ENCODE measurements at regions of chr3 and their contacts with region 1.

Region 1: DNA sequence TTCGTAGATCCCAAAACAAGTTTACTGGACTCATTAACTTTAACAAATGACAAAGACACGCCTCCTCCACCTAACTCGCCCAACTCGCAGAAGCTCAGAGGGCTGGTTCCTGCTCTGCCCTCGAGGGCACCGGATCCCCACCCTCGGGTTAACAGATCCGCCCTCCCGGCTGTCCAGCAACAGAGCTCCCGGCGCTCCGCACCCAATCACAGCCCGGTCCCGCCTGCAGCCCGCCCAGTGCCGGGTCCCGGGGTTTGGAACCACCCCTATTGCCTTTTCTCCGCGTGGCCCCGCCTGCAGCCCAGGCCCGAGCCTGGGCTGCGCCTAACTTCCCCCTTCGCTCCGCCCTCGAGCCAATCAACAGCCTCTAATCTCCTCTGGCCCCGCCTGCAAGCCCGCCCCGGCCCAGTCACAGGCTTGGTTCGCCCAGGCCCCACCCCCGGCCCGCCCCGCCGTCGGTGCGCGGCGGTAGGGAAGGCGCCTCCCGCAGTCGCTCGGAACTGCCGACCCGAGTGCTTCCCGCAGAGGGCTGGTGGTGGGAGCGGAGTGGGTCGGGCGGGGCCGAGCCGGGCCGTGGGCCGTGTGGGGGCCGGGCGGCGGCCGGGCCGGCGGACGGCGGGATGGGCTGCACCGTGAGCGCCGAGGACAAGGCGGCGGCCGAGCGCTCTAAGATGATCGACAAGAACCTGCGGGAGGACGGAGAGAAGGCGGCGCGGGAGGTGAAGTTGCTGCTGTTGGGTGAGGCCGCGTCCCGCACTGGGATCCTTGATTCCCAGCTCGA is at the start of gene GNAI2:
- DNase-seq: peak; percentile 98 to 99 (median 98)
- ATAC-seq: peak; percentile 85
- H3K4me3 ChIP-seq: peak within 1 kb of the TSS; percentile 94 to 100
- H3K4me3 Mint-ChIP-seq: peak within 1 kb of the TSS; percentile 96
- H3K27ac ChIP-seq: peak within 1 kb of the TSS; percentile 72 to 83
- H3K27ac Mint-ChIP-seq: peak within 1 kb of the TSS; percentile 96
- H3K4me1 ChIP-seq: peaks cover 38% of the 10 kb centered on the region
- H3K4me1 Mint-ChIP-seq: peaks cover 33% of the 10 kb centered on the region
- H3K27me3 ChIP-seq: no peaks in the 10 kb centered on the region
- H3K27me3 Mint-ChIP-seq: no peaks in the 10 kb centered on the region
- CTCF ChIP-seq: no peak
- total RNA-seq, gene GNAI2: 185 to 192 TPM

Region 2: DNA sequence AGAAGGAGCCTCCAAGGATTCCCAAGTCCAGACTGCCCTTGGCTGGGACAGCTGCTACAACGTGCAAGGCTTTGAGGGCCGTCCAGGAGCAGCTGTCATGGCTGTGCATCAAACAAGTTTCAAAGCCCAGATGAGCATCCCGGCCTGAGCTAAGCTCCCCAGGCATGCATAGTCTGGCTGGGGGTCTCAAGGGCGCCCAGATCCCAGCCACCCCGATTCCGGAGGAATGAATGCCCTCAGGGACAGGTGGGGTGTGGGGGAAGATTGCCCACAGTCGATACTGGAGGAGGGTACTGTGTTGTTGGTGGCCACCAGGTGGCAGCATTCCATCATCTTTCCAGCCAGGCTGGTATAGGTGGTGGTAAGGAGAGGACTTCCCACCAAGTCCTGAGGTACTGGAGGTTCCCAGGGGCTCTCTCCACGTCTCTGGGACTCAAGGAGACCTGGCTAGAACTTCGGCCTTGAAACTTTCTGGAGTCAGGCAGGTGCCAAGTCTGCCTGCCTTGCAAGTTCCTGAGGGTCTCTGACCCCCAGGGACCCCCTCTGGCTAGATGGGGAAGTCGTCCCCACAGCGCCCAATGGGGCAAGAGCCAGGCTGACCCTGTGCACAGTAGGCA is 114.4 kb before region 1 on chr3:
- CTCF ChIA-PET with region 1: no interaction called
- POLR2A ChIA-PET with region 1: no interaction called
- intact Hi-C with region 1: no loop called
- DNase-seq: peak; percentile 50 to 84 (median 75)
- ATAC-seq: peak; percentile 88
- H3K4me3 ChIP-seq: no peak overlapping the region
- H3K4me3 Mint-ChIP-seq: no peak overlapping the region
- H3K27ac ChIP-seq: no peak overlapping the region
- H3K27ac Mint-ChIP-seq: no peak overlapping the region
- H3K4me1 ChIP-seq: no peaks in the 10 kb centered on the region
- H3K4me1 Mint-ChIP-seq: no peaks in the 10 kb centered on the region
- H3K27me3 ChIP-seq: no peaks in the 10 kb centered on the region
- H3K27me3 Mint-ChIP-seq: no peaks in the 10 kb centered on the region
- CTCF ChIP-seq: peak; percentile 86

Region 3: GRCh38 chr3:50245831-50246516 is 10.1 kb after region 1 on chr3:
- CTCF ChIA-PET with region 1: interaction called, 257 read pairs
- POLR2A ChIA-PET with region 1: interaction called, 26 read pairs
- intact Hi-C with region 1: loop called (anchors 1 kb)
- DNase-seq: peak; percentile 90 to 99 (median 95)
- ATAC-seq: peak; percentile 81
- H3K4me3 ChIP-seq: peak overlapping the region; percentile 40 to 55
- H3K4me3 Mint-ChIP-seq: peak overlapping the region; percentile 75
- H3K27ac ChIP-seq: peak overlapping the region; percentile 32 to 88
- H3K27ac Mint-ChIP-seq: peak overlapping the region; percentile 94
- H3K4me1 ChIP-seq: peaks cover 87% of the 10 kb centered on the region
- H3K4me1 Mint-ChIP-seq: peaks cover 76% of the 10 kb centered on the region
- H3K27me3 ChIP-seq: no peaks in the 10 kb centered on the region
- H3K27me3 Mint-ChIP-seq: no peaks in the 10 kb centered on the region
- CTCF ChIP-seq: peak; percentile 80

Region 4: GRCh38 chr3:50298836-50299637 is 63.1 kb after region 1 on chr3 and contains the starts of genes HYAL3 and NAA80:
- CTCF ChIA-PET with region 1: no interaction called
- POLR2A ChIA-PET with region 1: interaction called, 5 read pairs
- intact Hi-C with region 1: loop called (anchors 1 kb)
- DNase-seq: peak; percentile 85 to 100 (median 99)
- ATAC-seq: peak; percentile 89
- H3K4me3 ChIP-seq: peak within 1 kb of the TSS; percentile 97
- H3K4me3 Mint-ChIP-seq: peak within 1 kb of the TSS; percentile 99
- H3K27ac ChIP-seq: peak within 1 kb of the TSS; percentile 93 to 94
- H3K27ac Mint-ChIP-seq: peak within 1 kb of the TSS; percentile 99
- H3K4me1 ChIP-seq: peaks cover 25% of the 10 kb centered on the region
- H3K4me1 Mint-ChIP-seq: peaks cover 28% of the 10 kb centered on the region
- H3K27me3 ChIP-seq: no peaks in the 10 kb centered on the region
- H3K27me3 Mint-ChIP-seq: no peaks in the 10 kb centered on the region
- CTCF ChIP-seq: peak; percentile 53
- total RNA-seq, gene HYAL3: 2.1 to 3.2 TPM
- total RNA-seq, gene NAA80: 37.1 to 40.7 TPM

Region 5: GRCh38 chr3:50337191-50337841 is 101.4 kb after region 1 on chr3:
- CTCF ChIA-PET with region 1: no interaction called
- POLR2A ChIA-PET with region 1: interaction called, 8 read pairs
- intact Hi-C with region 1: loop called in 1 of 2 experiments (anchors 5 kb)
- DNase-seq: peak; percentile 74 to 98 (median 93)
- ATAC-seq: peak; percentile 81
- H3K4me3 ChIP-seq: peak overlapping the region; percentile 88 to 98
- H3K4me3 Mint-ChIP-seq: peak overlapping the region; percentile 98
- H3K27ac ChIP-seq: peak overlapping the region; percentile 91 to 93
- H3K27ac Mint-ChIP-seq: peak overlapping the region; percentile 96
- H3K4me1 ChIP-seq: peaks cover 77% of the 10 kb centered on the region
- H3K4me1 Mint-ChIP-seq: peaks cover 74% of the 10 kb centered on the region
- H3K27me3 ChIP-seq: no peaks in the 10 kb centered on the region
- H3K27me3 Mint-ChIP-seq: no peaks in the 10 kb centered on the region
- CTCF ChIP-seq: no peak